Heart right ventricle (tissue), 16 donors: ENCODE measurements at regions of chr12 and their contacts with region 1.

Region 1: GRCh38 chr12:47032644-47033043 is 46.8 kb upstream of the PCED1B start:
- DNase-seq: peak in 1 of 2 donors; percentile 22
- ATAC-seq: peak in 5 of 8 donors; percentile 57 to 81 (median 73)
- H3K4me3 ChIP-seq: no peak overlapping the region
- H3K27ac ChIP-seq: no peak overlapping the region
- H3K4me1 ChIP-seq: peaks cover 0 to 7% (median 0%) of the 10 kb centered on the region in 9 donors
- H3K27me3 ChIP-seq: peaks cover 0 to 3% (median 0%) of the 10 kb centered on the region in 7 donors
- CTCF ChIP-seq: peak; percentile 23 to 74 (median 65)

Region 2: DNA sequence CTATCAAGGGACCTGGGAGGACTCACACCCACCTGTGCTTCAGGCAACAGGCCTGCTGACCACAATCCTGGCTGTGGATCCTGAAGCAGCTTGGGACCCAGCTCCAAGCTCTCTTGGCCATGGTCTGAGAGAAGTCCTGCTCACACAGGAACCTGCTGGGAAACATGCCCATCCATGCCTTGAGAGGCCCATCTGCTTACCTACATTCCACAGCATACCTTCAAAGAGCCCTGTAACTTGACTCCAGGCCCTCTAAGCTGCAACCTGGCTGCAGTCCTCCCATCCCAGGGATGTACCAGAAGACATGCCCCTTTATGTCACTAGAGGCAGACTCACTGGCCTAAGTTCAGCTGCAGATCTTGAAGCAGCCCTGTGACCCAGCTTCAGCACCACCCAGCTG is 108.8 kb after region 1 on chr12:
- intact Hi-C with region 1: no loop called
- DNase-seq: no peak
- ATAC-seq: no peak
- H3K4me3 ChIP-seq: no peak overlapping the region
- H3K27ac ChIP-seq: no peak overlapping the region
- H3K4me1 ChIP-seq: peaks cover 0 to 8% (median 0%) of the 10 kb centered on the region in 9 donors
- H3K27me3 ChIP-seq: no peaks in the 10 kb centered on the region
- CTCF ChIP-seq: no peak

Region 3: GRCh38 chr12:47216150-47216677 is 183.6 kb after region 1 on chr12:
- intact Hi-C with region 1: no loop called
- DNase-seq: no peak
- ATAC-seq: peak in 7 of 8 donors; percentile 63 to 85 (median 76)
- H3K4me3 ChIP-seq: peak overlapping the region in 6 of 10 donors; percentile 7 to 55 (median 14)
- H3K27ac ChIP-seq: peak overlapping the region in 3 of 10 donors; percentile 42 to 88 (median 44)
- H3K4me1 ChIP-seq: peaks cover 0 to 14% (median 0%) of the 10 kb centered on the region in 9 donors
- H3K27me3 ChIP-seq: no peaks in the 10 kb centered on the region
- CTCF ChIP-seq: no peak

Region 4: DNA sequence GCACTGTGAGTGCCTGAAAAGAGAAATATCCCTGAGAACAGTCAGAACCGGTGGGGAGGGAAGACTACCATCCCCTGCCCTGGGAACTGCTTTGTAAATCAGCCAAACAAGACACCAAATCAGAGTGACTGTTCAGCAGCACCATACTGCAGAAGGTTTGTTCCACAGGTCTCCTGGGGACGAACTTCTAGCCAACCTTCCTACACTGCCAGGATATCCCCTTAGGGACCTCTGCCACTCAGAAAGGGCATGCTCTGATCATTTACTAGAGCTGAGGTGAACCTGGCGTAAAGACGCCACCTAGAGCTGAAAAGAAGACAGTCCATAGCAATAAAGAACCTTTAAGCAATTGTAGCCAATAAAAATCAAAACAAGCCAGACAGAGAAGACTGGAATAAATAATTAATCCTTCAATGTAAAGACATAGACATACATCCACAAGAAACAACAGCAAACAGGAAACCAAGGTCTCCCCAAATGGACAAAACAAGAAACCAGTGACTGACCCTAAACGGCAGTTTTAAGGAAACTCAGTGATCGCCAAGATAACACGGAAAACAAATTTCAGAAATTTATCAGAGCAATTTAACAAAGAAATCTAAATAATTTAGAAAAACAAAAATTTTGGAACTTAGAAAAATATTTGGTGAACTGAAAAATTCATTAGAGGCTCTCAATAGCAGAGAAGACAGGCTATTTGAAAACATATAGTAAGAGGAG is 275.2 kb after region 1 on chr12:
- intact Hi-C with region 1: loop called in 9 of 10 experiments (anchors 1 to 10 kb)
- DNase-seq: no peak
- ATAC-seq: peak; percentile 47 to 90 (median 75)
- H3K4me3 ChIP-seq: peak overlapping the region in 2 of 10 donors; percentile 2 to 31
- H3K27ac ChIP-seq: peak overlapping the region in 1 of 10 donors; percentile 16
- H3K4me1 ChIP-seq: peaks cover 0 to 12% (median 0%) of the 10 kb centered on the region in 9 donors
- H3K27me3 ChIP-seq: no peaks in the 10 kb centered on the region
- CTCF ChIP-seq: peak in 7 of 9 donors; percentile 42 to 66 (median 53)

Region 5: GRCh38 chr12:47397664-47398281 is 365.1 kb after region 1 on chr12:
- intact Hi-C with region 1: loop called in 9 of 10 experiments (anchors 5 to 10 kb)
- DNase-seq: no peak
- ATAC-seq: peak in 5 of 8 donors; percentile 43 to 80 (median 66)
- H3K4me3 ChIP-seq: no peak overlapping the region
- H3K27ac ChIP-seq: peak overlapping the region in 1 of 10 donors; percentile 16
- H3K4me1 ChIP-seq: peaks cover 0 to 22% (median 8%) of the 10 kb centered on the region in 9 donors
- H3K27me3 ChIP-seq: no peaks in the 10 kb centered on the region
- CTCF ChIP-seq: peak in 8 of 9 donors; percentile 29 to 60 (median 38)

Region 6: DNA sequence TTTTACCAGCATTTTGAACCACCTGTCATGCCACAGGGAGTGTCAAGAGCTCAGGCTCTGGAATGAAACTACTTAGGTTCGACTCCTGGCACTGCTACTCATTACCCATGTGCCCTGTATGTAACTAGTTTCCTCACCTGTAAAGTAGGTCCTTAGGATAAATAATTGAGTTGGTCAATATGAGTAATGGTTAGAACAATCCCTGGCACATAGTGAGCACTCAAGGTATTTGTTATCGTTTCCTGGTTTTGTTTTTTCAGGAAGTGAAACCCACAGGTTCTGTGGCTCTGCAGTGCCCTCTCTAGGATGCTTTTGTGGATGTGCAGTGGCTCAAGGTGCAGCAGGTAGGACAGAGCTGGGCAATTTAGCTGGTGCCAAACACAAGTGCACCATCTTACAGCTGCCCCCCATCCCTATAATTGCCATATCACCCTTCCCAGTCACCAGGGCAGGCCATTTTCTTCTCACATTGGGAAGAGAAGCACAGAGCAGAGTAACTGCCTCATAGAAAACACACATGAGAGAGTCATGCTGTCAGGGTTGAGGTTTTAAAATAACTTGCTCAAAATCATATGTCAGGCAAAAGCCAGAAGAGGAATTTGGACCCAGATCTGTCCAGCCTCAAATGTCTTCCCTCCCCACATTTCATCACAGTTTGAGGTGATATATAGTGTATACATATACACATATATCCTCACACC is 375.7 kb after region 1 on chr12:
- intact Hi-C with region 1: loop called in 2 of 10 experiments (anchors 10 kb)
- DNase-seq: peak in 1 of 2 donors; percentile 6
- ATAC-seq: peak in 4 of 8 donors; percentile 33 to 62 (median 60)
- H3K4me3 ChIP-seq: no peak overlapping the region
- H3K27ac ChIP-seq: no peak overlapping the region
- H3K4me1 ChIP-seq: peaks cover 0 to 16% (median 10%) of the 10 kb centered on the region in 9 donors
- H3K27me3 ChIP-seq: no peaks in the 10 kb centered on the region
- CTCF ChIP-seq: peak in 7 of 9 donors; percentile 9 to 53 (median 35)

Region 7: DNA sequence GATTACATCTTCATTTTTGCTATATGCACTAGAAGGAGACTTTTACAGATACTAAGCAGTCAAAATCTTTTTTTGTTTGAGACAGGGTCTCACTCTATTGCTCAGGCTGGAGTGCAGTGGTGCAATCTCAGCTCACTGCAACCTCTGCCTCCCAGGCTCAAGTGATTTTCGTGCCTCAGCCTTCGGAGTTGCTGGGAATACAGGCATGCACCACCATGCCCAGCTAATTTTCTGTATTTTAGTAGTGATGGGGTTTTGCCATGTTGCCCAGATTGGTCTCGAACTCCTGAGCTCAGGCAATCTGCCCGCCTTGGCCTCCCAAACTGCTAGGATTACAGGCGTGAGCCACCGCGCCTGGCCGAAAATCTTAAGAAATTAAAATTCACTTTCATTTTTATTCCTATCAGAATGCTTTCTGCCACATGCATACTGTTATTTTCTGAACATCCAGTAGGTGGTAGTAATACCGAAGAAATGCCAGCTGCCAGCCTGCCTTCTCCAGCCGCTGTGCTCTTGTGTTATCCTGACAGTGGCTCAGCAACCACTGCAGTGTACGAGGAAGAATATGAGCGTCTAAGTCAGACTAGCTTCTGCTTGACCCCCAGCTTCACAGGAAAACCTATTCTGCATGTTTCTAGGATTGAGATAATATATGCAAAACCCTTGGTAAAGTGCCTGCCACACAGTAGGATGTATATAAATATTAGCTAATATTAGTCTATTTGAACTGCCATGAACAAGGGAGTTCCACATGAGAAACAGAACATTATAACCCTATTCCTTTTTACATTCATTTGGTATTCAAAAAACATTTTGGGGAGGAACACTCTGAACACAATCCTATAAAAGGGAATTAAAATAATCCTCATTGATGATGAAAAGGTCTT is 619.0 kb after region 1 on chr12:
- intact Hi-C with region 1: loop called in 1 of 10 experiments (anchors 10 kb)
- DNase-seq: peak; percentile 23 to 34
- ATAC-seq: peak; percentile 83 to 91 (median 88)
- H3K4me3 ChIP-seq: peak overlapping the region in 4 of 10 donors; percentile 9 to 19 (median 12)
- H3K27ac ChIP-seq: peak overlapping the region in 1 of 10 donors; percentile 26
- H3K4me1 ChIP-seq: peaks cover 0 to 23% (median 13%) of the 10 kb centered on the region in 9 donors
- H3K27me3 ChIP-seq: no peaks in the 10 kb centered on the region
- CTCF ChIP-seq: peak; percentile 56 to 83 (median 74)

Region 8: DNA sequence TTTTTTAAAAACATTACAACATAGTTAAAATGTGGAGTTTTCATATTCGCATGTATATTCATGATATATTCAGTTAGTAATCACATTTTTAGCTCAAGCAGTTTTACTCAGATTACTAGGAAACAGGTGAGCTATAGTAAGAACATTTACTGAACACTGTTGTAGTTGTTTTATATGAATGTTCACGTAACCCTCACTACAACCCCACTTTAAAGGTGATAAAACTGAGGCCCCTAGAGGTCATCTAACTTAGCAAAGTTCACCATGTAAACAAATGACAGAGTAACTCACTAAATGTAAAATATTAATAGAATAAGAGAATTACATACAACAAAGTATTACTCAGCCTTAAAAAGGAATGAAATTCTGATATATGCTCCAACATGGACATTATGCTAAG is 647.1 kb after region 1 on chr12:
- intact Hi-C with region 1: loop called in 2 of 10 experiments (anchors 5 kb)
- DNase-seq: no peak
- ATAC-seq: no peak
- H3K4me3 ChIP-seq: no peak overlapping the region
- H3K27ac ChIP-seq: no peak overlapping the region
- H3K4me1 ChIP-seq: no peaks in the 10 kb centered on the region
- H3K27me3 ChIP-seq: no peaks in the 10 kb centered on the region
- CTCF ChIP-seq: no peak

Region 9: DNA sequence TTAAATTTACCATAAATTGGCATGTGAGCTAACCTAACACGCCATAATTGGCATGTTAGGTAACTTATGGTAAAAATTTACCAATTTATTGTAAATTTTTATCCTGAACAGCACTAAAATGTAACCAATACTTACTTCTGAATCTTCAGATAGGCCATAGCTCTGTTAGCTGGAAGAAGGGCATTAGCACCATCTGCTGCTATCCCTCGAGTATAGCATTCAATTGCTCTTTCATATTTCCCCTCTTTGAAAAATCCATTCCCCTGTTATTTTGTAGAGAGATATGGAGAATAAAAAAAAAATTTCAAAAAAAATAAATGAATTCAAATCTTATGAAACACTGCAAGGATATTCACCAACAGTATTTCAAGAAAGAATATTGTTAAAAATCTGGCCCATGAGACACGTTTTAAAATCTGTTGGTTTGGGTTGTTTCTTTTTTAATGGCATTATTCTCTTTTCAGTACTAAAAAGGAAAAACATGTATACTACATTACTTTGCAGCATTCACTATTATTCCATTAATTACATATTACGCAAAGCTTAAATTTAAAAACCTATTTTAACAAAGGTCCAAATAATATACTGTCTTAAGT is 654.1 kb after region 1 on chr12:
- intact Hi-C with region 1: loop called in 9 of 10 experiments (anchors 2 to 5 kb)
- DNase-seq: no peak
- ATAC-seq: peak in 2 of 8 donors; percentile 61 to 66
- H3K4me3 ChIP-seq: no peak overlapping the region
- H3K27ac ChIP-seq: no peak overlapping the region
- H3K4me1 ChIP-seq: no peaks in the 10 kb centered on the region
- H3K27me3 ChIP-seq: no peaks in the 10 kb centered on the region
- CTCF ChIP-seq: peak in 7 of 9 donors; percentile 52 to 78 (median 63)